ENCODE measurements at regions of chr10 and their contacts with region 1.

Region 1: DNA sequence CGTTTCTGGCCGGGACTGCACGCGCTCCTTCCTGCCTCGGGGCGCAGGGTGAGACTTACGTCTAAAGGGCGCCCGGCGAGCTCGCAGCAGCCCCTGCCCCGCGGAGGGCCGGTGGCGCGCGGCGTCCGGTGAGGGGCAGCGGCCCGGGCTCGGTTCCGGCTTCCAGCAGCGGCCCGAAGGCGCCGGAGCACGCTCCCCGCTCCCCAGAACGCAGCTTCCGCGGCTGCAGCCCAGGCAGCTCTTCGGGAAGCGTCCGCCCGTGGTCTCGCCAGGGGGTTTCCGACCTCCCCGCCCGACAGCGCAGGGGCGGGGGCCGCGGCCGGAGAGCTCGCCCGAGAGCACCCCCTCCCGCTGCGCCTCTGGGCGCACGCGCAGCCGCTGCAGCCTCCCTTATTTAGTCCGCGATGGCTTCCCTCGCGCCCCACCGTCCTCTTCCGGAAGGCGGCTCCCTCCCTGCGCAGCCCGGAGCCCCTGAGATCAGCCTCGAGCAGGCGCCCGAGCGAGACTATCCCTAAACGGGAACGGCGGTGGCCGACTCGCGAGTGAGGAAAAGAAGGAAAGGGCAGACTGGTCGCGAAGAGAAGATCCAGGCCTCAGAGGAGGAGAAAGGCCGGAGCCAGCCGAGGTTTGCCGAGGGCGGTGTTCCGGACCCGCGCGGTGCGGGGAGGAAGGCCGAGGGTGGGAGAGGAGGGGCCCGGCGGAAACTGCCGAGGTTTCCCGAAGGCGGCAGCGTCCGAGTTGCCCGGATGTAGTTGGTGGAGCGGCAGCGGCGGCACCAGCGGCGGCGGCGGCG is at the start of gene WAC:
- DNase-seq: peak; percentile 81 to 99 (median 96)

Region 2: GRCh38 chr10:27504007-27504807 is 1028.4 kb before region 1 on chr10 and contains the start of gene RAB18:
- intact Hi-C with region 1: loop called (anchors 10 kb)
- DNase-seq: peak; percentile 89 to 98 (median 96)

Region 3: DNA sequence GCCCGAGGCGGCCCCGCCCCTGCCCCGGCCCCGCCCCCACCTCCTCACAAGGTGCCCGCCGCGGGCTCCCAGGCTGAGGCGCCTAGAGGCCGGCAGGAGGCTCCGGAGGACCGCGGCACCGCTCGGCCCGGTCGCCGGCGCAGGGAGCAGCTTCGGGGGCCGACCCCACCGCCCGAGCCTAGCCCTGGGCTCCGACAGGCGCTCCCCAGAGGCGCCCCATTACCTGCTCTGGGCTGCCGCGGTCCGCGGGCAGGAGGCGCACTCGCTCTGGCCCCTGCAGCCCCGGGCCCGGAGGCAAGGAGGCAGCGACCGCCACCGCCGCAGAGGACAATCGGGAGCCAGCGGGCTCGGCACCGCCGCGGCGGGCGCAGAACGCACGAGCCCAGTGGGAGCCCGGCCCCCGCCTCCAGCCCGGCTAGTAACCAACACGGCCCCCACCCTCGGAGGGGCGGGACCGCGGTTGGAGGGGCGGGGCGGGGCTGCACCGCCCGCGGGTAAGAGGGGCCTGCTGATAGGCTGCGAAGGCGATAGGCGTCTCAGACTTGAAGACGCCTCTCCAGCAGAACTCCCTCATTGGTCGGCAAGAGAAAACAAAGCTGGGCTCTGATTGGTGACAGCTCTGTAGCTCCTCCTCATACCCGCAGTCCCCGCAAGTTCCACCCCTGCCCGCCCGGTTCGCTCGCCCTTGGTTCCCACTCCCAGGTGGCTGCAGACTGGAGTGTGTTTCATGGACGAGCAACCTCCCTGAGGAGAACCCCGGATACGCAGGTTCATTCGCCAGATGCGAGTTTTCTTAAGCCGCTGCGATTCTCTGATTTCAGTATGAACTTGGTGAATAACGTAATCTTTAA is 229.7 kb before region 1 on chr10 and contains the start of gene MPP7:
- intact Hi-C with region 1: loop called (anchors 10 kb)
- DNase-seq: peak; percentile 90 to 99 (median 98)

Region 4: GRCh38 chr10:28479425-28479865 is 53.1 kb before region 1 on chr10:
- intact Hi-C with region 1: no loop called
- DNase-seq: no peak

Region 5: DNA sequence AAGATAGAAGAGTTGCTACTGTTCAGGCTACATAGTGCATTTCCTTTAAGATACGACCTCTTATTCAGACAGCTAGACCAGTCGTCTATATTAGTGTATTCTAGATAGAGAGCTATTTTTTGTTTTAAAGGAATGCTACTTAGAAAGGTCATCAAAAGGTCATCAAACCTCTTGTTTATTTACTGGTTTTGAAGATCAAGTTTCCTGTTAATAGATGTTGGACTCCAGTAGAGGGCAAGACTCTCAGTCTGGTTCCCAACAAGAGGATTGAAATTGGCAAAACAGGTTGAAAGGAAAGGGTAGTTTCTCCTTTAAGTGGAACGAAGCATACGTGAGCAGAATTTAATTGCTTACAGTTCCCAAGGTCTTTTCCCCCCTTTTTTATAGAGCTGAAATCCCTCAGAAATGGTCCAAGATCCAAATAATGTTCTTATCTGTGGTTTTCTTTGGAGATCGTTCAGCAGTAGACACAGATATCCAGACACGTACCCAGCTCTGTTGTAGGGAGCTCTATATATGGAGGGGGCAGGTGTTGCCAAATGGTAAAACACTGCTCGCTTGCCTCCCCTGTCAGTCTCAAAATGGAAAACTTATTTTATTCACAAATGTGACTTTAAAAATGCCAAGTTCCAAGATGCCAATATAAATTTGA is 181.9 kb after region 1 on chr10:
- intact Hi-C with region 1: no loop called
- DNase-seq: no peak

Region 6: DNA sequence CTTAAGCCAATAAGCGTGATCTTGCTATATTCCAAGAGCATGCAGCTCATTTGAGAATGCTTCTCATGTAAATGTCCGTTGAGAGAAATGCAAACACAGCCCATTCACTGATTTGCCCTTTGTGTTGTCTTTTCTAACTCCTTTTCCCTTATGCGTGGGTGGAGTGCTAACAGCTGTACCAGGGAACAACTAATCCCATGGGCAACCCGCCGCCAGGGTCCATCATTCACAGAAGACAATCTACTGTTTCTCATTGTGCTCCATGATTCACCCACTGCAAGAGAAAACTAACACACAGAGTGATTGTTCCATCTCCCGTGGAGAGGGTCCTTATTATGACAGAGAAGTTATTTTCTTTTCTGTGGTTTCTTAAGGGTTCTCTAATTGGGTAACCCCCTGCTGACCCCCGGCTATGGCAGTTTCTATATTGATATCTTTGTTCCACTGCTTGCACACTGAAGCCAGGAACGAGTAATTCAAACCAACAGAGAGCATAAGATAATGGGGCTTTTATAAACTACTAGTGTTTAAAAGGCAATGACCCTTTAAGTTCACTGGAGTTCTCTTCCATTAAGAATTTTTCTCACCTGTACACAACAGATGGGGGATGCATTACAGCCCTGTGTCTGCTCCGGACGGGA is 443.4 kb after region 1 on chr10:
- intact Hi-C with region 1: no loop called
- DNase-seq: peak in 20 of 42 donors; percentile 6 to 57 (median 27)